Sigmoid colon (tissue), 7 donors: ENCODE measurements at regions of chr11 and their contacts with region 1.

Region 1: DNA sequence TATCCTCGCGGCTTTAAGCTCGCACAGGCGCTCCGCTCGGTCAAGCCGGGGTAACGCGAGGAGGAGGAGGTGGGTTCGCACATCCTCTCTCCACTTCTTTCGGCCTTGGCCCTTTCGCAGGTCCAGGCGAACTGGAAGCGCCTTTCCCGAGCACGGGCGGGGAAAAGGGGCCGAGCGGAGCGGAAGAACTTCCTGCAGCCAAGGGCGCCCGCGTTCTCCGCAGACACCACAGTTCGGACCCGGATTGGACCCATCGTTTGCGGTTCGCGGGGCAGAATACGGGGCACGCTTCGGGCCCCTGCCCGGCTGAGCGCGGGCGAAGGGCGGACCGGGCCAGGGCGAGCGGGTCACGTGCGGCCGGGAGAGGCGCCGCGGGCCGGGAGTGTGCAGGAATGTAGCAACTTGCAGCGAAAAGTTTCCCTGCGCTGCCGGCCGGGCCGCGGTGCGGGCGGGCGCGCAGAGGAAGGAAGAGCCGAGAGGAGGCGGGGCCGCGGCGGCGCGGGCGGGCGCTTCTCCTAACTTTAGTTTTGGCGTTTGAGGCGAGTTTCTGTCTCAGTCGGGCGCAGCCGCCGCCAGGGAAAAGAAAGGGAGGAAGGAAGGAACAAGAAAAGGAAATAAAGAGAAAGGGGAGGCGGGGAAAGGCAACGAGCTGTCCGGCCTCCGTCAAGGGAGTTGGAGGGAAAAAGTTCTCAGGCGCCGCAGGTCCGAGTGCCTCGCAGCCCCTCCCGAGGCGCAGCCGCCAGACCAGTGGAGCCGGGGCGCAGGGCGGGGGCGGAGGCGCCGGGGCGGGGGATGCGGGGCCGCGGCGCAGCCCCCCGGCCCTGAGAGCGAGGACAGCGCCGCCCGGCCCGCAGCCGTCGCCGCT is at the start of gene YAP1:
- DNase-seq: peak; percentile 94
- H3K4me3 ChIP-seq: peak within 1 kb of the TSS; percentile 86 to 98 (median 96)
- H3K27ac ChIP-seq: peak within 1 kb of the TSS; percentile 96 to 99 (median 99)
- H3K4me1 ChIP-seq: peaks cover 0 to 35% (median 19%) of the 10 kb centered on the region in 4 donors
- H3K27me3 ChIP-seq: no peaks in the 10 kb centered on the region
- CTCF ChIP-seq: no peak
- EP300 ChIP-seq: no peak
- POLR2A ChIP-seq: peak; percentile 28 to 51
- total RNA-seq, gene YAP1: 159 to 239 (median 186) TPM

Region 2: DNA sequence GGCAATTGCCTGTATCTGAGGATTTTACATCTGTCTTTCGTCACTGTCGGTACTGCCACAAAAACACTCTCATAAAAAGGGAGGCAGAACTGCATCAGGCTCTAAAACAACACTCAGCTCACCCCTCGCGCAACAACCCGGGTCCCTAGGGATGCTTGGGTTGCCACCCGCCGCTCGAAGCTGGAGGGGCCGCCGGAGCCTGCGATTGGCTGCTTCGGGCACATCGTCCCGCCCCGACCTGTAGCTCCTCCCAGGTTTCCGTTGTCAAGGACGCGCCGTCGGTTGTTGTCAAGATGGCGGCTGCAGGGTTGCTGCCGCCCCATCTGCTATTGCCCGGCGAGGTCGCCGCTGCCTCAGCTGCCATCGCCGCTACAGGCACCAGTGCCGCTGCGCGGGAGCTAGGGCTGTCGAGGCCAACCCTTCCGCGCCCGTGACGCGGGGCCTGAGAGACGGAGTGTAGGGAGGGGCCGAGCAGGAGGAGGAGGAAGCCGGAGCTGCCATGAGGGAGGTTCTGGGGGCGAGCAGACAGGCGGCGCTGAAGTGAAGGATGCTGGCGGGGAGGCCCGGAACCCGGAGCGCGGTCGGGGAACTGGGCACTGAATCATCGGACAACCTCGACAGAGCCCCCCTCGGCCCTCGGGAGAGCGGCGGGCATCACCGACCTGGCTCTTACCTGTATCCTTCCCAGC is 195.2 kb before region 1 on chr11 and contains the start of gene CEP126:
- intact Hi-C with region 1: loop called (anchors 2 kb)
- DNase-seq: peak; percentile 97
- H3K4me3 ChIP-seq: peak within 1 kb of the TSS; percentile 68 to 82 (median 71)
- H3K27ac ChIP-seq: peak within 1 kb of the TSS; percentile 83 to 86 (median 84)
- H3K4me1 ChIP-seq: peaks cover 0 to 25% (median 14%) of the 10 kb centered on the region in 4 donors
- H3K27me3 ChIP-seq: no peaks in the 10 kb centered on the region
- CTCF ChIP-seq: peak; percentile 16 to 36 (median 28)
- EP300 ChIP-seq: peak in 1 of 4 donors; percentile 39
- POLR2A ChIP-seq: peak in 1 of 2 donors; percentile 17
- total RNA-seq, gene CEP126: 3.7 to 15.5 (median 8.3) TPM

Region 3: GRCh38 chr11:102036757-102037156 is 73.4 kb before region 1 on chr11:
- intact Hi-C with region 1: no loop called
- DNase-seq: no peak
- H3K4me3 ChIP-seq: no peak overlapping the region
- H3K27ac ChIP-seq: no peak overlapping the region
- H3K4me1 ChIP-seq: no peaks in the 10 kb centered on the region
- H3K27me3 ChIP-seq: no peaks in the 10 kb centered on the region
- CTCF ChIP-seq: no peak
- EP300 ChIP-seq: no peak
- POLR2A ChIP-seq: no peak

Region 4: GRCh38 chr11:102047305-102047924 is 62.7 kb before region 1 on chr11 and contains the start of gene CFAP300:
- intact Hi-C with region 1: loop called (anchors 5 kb)
- DNase-seq: peak; percentile 94
- H3K4me3 ChIP-seq: peak within 1 kb of the TSS; percentile 46 to 62 (median 58)
- H3K27ac ChIP-seq: peak within 1 kb of the TSS; percentile 61 to 78 (median 67)
- H3K4me1 ChIP-seq: peaks cover 0 to 10% (median 5%) of the 10 kb centered on the region in 4 donors
- H3K27me3 ChIP-seq: no peaks in the 10 kb centered on the region
- CTCF ChIP-seq: no peak
- EP300 ChIP-seq: no peak
- POLR2A ChIP-seq: no peak
- total RNA-seq, gene CFAP300: 2.0 to 15.0 (median 4.0) TPM

Region 5: GRCh38 chr11:102157219-102157618 is 47.1 kb after region 1 on chr11:
- intact Hi-C with region 1: loop called (anchors 5 kb)
- DNase-seq: peak; percentile 76
- H3K4me3 ChIP-seq: no peak overlapping the region
- H3K27ac ChIP-seq: no peak overlapping the region
- H3K4me1 ChIP-seq: peaks cover 0 to 68% (median 44%) of the 10 kb centered on the region in 4 donors
- H3K27me3 ChIP-seq: no peaks in the 10 kb centered on the region
- CTCF ChIP-seq: no peak
- EP300 ChIP-seq: no peak
- POLR2A ChIP-seq: no peak

Region 6: GRCh38 chr11:102214623-102215022 is 104.5 kb after region 1 on chr11:
- intact Hi-C with region 1: loop called (anchors 5 kb)
- DNase-seq: no peak
- H3K4me3 ChIP-seq: no peak overlapping the region
- H3K27ac ChIP-seq: no peak overlapping the region
- H3K4me1 ChIP-seq: peaks cover 0 to 9% (median 8%) of the 10 kb centered on the region in 4 donors
- H3K27me3 ChIP-seq: no peaks in the 10 kb centered on the region
- CTCF ChIP-seq: no peak
- EP300 ChIP-seq: no peak
- POLR2A ChIP-seq: no peak

Region 7: DNA sequence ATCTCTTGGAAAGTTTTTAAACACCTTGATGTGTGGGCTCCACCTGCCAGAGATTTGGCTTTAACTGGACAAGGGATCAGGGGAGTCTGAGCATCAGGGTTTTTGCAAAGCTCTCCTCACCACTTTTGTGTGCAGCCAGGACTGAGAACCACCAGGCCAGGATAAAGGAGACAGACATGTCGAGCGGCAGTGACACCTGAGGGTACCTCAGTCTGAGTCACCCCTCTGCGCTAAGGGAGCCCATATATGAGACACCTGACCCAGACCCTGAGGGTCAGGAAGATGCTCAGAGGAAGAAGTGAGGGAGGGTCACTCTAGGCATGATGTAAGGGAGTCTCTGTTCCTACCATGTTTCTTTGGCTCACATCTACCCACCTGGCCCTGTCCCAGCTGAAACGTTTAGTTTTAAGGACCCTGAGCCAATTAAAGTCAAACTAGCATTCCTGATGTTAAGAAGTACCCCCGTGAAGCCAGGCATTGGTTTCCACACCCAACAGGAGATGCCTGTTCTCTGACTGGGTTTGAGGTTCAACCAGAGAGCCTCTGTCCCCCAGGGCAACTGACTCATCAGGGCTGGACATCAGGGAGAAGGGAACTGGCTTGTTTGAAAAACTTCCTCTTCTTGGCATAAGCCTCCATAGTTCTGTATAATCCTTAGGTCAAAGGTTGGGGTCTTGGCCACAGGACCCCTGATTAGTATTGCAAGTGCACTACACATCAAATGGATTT is 134.7 kb after region 1 on chr11:
- intact Hi-C with region 1: no loop called
- DNase-seq: no peak
- H3K4me3 ChIP-seq: no peak overlapping the region
- H3K27ac ChIP-seq: no peak overlapping the region
- H3K4me1 ChIP-seq: peaks cover 0 to 7% (median 4%) of the 10 kb centered on the region in 4 donors
- H3K27me3 ChIP-seq: no peaks in the 10 kb centered on the region
- CTCF ChIP-seq: no peak
- EP300 ChIP-seq: no peak
- POLR2A ChIP-seq: no peak

Region 8: GRCh38 chr11:102279641-102280170 is 169.6 kb after region 1 on chr11:
- intact Hi-C with region 1: loop called (anchors 2 kb)
- DNase-seq: no peak
- H3K4me3 ChIP-seq: peak overlapping the region in 3 of 4 donors; percentile 11 to 28 (median 21)
- H3K27ac ChIP-seq: peak overlapping the region in 3 of 4 donors; percentile 38 to 66 (median 39)
- H3K4me1 ChIP-seq: peaks cover 0 to 18% (median 10%) of the 10 kb centered on the region in 4 donors
- H3K27me3 ChIP-seq: no peaks in the 10 kb centered on the region
- CTCF ChIP-seq: peak in 2 of 4 experiments; percentile 18 to 38
- EP300 ChIP-seq: no peak
- POLR2A ChIP-seq: no peak

Region 9: DNA sequence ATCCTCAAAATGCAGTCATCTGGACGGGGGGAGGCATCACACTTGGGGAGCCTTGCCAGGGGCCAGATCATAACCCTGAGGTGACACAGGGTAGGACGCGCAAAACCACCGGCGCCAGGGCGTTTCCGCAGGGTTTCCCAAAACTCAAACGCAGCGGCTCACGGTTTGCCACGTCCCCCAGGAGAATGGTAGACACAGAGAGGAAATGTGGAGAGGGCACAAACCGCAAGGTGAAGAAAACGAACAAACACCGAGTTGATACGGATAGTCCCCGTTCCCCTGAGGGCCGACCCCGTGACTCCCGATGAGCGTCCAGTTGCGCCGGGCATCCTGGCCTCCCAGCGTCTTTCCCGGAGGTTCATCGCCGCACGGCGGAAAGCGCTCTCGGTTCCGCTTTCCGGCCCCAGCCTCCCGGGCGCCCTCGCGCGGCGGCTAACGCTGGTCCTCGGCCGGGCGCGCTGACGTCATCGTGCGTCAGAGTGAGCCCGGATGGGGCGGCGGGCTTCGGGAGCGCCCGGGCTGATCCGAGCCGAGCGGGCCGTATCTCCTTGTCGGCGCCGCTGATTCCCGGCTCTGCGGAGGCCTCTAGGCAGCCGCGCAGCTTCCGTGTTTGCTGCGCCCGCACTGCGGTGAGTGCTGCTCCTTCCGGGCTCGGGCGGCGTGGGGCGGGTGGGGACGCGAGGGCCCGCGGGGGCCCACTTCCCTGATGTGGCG is 236.8 kb after region 1 on chr11 and contains the start of gene BIRC2:
- intact Hi-C with region 1: loop called (anchors 2 kb)
- DNase-seq: peak; percentile 96
- H3K4me3 ChIP-seq: peak within 1 kb of the TSS; percentile 63 to 90 (median 83)
- H3K27ac ChIP-seq: peak within 1 kb of the TSS; percentile 92 to 99 (median 99)
- H3K4me1 ChIP-seq: peaks cover 0 to 38% (median 33%) of the 10 kb centered on the region in 4 donors
- H3K27me3 ChIP-seq: no peaks in the 10 kb centered on the region
- CTCF ChIP-seq: peak; percentile 61 to 86 (median 73)
- EP300 ChIP-seq: peak in 1 of 4 donors; percentile 10
- POLR2A ChIP-seq: peak; percentile 87 to 88
- total RNA-seq, gene BIRC2: 32.7 to 56.0 (median 53.2) TPM